ENCODE measurements at regions of chr5 and their contacts with region 1.

Region 1: GRCh38 chr5:94968507-94969095 is 316.3 kb downstream of the MCTP1 start:
- DNase-seq: no peak
- ATAC-seq: peak in 1 of 2 donors; percentile 53
- H3K4me3 ChIP-seq: no peak overlapping the region
- H3K27ac ChIP-seq: no peak overlapping the region
- H3K4me1 ChIP-seq: no peaks in the 10 kb centered on the region
- H3K27me3 ChIP-seq: no peaks in the 10 kb centered on the region
- CTCF ChIP-seq: peak; percentile 27 to 55 (median 39)
- POLR2A ChIP-seq: no peak

Region 2: DNA sequence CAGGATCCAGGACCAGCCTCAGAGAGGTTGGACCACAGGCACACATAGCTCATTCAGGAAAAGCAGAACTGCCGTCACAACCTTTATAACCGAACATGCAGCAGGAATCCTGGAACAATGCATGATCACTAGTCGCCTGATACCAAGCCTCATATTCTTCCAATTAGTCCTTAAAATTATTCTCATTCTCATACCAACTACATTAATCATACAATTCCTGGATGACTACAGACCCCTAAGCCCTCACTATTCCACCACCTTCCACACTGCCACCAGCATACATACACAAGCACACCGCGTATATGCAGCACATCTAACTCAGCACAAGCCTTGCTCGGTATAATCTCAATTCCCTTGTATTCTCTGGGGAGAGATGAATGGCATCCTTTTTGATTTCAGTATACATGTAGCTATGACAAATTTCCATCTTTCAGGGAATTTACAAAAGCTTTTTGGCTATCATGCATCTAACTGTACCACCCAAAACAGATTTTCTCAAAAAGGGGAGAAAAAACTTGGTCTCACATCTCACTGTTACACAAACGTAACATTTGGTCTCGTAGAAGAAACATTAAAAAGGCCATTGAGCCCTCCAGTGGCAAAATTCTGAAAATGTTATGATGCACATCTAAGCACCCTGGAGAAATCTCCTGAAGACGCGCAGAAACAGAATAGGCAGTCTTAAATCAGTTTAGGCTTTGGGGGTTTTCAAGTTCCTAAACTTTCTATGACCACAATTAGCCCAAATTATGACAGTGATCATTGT is 270.1 kb after region 1 on chr5:
- in situ Hi-C with region 1: loop called in 1 of 4 experiments (anchors 25 kb)
- intact Hi-C with region 1: loop called (anchors 10 kb)
- DNase-seq: no peak
- ATAC-seq: no peak
- H3K4me3 ChIP-seq: no peak overlapping the region
- H3K27ac ChIP-seq: no peak overlapping the region
- H3K4me1 ChIP-seq: no peaks in the 10 kb centered on the region
- H3K27me3 ChIP-seq: no peaks in the 10 kb centered on the region
- CTCF ChIP-seq: peak in 1 of 5 experiments; percentile 22
- POLR2A ChIP-seq: no peak

Region 3: DNA sequence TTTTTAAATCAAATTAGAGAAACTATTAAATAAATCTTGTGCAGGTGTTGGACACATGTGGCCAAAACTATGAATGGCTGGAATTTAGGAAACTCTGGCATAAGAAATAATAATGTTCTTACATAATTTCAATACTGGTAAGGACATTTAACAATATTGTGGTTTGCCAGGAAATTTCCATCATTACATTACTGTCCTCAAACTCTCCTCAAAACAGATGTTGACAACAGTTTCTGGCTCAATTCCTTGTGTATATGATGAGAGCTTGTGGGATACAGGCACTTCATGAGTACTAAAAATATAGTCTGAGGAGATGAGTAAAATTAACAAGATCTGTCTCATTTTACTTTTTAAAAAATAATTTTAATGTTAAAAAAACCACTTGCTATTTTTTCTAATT is 288.4 kb after region 1 on chr5:
- in situ Hi-C with region 1: loop called in 1 of 4 experiments (anchors 10 kb)
- intact Hi-C with region 1: no loop called
- DNase-seq: no peak
- ATAC-seq: no peak
- H3K4me3 ChIP-seq: no peak overlapping the region
- H3K27ac ChIP-seq: no peak overlapping the region
- H3K4me1 ChIP-seq: no peaks in the 10 kb centered on the region
- H3K27me3 ChIP-seq: no peaks in the 10 kb centered on the region
- CTCF ChIP-seq: no peak
- POLR2A ChIP-seq: no peak